K562 (cell line): ENCODE measurements at regions of chrX and their contacts with region 1.

Region 1: DNA sequence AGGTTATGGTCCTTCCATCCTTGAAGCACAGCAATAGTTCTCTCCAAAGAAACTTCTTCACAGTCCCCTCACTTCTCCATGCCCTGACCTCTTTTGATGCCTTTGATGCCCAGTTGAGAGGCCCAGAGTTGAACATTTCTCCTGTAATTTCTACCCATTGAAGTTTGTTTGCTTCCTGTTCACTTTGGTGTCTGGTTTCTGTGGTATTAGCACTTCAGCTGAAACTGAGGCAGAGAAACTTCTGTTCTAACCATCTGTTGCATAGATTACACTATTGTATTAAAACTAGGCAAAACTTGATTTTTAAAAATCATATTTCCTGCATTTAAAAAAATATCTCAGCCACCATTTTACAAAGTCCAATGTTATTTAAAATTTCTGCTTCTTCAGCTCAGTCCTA is 89.8 kb upstream of the ADGRG2 start:
- DNase-seq: no peak
- ATAC-seq: no peak
- H3K4me3 ChIP-seq: no peak overlapping the region
- H3K27ac ChIP-seq: no peak overlapping the region
- H3K4me1 ChIP-seq: no peaks in the 10 kb centered on the region
- H3K27me3 ChIP-seq: no peaks in the 10 kb centered on the region; a peak in 1 of 5 replicates
- CTCF ChIP-seq: no peak
- EP300 ChIP-seq: no peak
- POLR2A ChIP-seq: no peak
- RAD21 ChIP-seq: no peak

Region 2: DNA sequence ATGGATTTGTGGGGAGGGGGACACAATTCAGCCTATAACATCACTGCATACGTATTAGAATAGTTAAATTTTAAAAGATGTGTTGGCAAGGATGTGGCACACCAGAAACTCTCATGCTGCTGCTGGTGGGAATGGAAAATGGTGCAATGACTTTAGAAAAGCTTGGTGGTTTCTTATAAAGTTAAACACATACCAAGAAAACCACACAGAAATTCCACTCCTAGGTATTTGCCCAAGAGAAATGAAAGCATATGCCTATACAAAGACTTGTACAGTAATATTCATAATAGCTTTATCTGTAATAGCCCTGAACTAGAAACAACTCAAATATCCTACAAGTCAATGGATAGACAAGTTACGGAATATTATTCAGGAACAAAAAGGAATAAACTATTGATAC is 60.4 kb after region 1 on chrX:
- CTCF ChIA-PET with region 1: no interaction called
- POLR2A ChIA-PET with region 1: no interaction called
- in situ Hi-C with region 1: loop called (anchors 5 kb)
- intact Hi-C with region 1: no loop called
- DNase-seq: no peak
- ATAC-seq: no peak
- H3K4me3 ChIP-seq: no peak overlapping the region
- H3K27ac ChIP-seq: no peak overlapping the region
- H3K4me1 ChIP-seq: no peaks in the 10 kb centered on the region
- H3K27me3 ChIP-seq: no peaks in the 10 kb centered on the region; a peak in 1 of 5 replicates
- CTCF ChIP-seq: no peak
- EP300 ChIP-seq: no peak
- POLR2A ChIP-seq: no peak
- RAD21 ChIP-seq: no peak